Activated B cell treated with CpG ODN at 0.5 μM for 24 hours (primary cell): ENCODE measurements at regions of chr10 and their contacts with region 1.

Region 1: DNA sequence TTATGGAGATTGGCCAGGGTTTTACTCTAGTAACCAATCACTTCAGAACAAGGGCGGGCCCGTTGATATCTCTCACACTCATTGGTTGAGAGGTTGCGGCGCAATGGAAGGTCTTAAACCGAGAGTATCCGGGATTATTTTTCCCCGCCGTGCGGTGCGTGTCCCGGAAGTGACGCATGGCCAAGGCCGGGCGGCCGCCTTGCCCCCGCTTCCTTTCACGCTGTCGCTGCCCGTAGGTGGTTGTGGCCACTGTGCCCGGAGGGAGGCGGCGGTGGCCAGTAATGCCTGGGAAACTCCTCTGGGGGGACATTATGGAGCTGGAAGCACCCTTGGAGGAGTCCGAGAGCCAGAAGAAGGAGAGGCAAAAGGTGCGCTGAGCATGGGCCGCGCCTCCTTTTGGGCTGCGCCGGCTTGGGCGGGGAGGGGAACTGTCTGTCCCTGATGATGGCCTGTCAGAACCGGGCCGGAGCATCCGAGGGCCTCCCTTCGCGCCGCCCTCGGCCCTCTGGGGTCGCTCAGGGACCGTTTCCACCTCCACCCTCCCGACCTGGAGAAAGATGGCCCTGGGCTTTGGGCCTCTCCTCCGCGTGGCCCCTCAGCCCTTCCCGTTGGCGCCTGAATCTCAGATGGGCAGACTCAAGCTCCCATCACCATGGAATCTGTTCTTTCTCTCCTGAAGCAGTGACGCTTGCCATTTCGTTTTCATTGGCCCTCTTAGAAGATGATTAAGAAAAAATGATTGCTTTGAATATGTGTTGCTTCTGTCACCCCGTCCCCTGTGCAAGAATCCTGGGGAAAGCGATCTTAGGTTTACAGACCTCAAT is at the start of gene DDX50:
- DNase-seq: peak; percentile 92
- ATAC-seq: peak; percentile 96
- H3K4me3 Mint-ChIP-seq: peak within 1 kb of the TSS; percentile 98
- H3K27ac Mint-ChIP-seq: peak within 1 kb of the TSS; percentile 98
- H3K4me1 Mint-ChIP-seq: peaks cover 40% of the 10 kb centered on the region
- H3K27me3 Mint-ChIP-seq: no peaks in the 10 kb centered on the region
- CTCF ChIP-seq: no peak
- total RNA-seq, gene DDX50: 36.3 and 41.7 TPM in 2 replicates

Region 2: DNA sequence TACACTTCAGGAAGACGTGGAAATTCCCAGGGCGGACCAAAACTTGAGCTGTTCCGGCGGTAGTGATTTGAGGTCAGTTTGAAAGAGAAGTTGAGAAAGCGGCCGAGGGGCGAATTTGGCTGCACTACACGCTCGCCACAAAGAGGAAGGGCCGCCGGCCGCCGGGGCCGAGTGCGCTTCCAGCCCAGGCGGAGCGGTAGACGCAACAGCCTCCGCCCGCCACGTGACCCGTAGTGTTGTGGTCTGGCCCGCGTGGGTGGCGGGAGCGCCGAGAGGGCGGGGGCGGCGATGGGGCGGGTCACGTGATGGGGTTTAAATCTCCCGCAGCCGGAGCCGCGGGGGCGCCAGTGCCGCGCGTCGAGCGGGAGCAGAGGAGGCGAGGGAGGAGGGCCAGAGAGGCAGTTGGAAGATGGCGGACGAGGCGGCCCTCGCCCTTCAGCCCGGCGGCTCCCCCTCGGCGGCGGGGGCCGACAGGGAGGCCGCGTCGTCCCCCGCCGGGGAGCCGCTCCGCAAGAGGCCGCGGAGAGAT is 1016.9 kb before region 1 on chr10 and contains the start of gene SIRT1:
- CTCF ChIA-PET with region 1: no interaction called
- POLR2A ChIA-PET with region 1: no interaction called
- intact Hi-C with region 1: loop called (anchors 10 kb)
- DNase-seq: peak; percentile 97
- ATAC-seq: peak; percentile 81
- H3K4me3 Mint-ChIP-seq: peak within 1 kb of the TSS; percentile 92
- H3K27ac Mint-ChIP-seq: peak within 1 kb of the TSS; percentile 96
- H3K4me1 Mint-ChIP-seq: peaks cover 31% of the 10 kb centered on the region
- H3K27me3 Mint-ChIP-seq: no peaks in the 10 kb centered on the region
- CTCF ChIP-seq: no peak
- total RNA-seq, gene SIRT1: 30.1 and 31.6 TPM in 2 replicates

Region 3: GRCh38 chr10:68526626-68527307 is 374.5 kb before region 1 on chr10:
- CTCF ChIA-PET with region 1: no interaction called
- POLR2A ChIA-PET with region 1: no interaction called
- intact Hi-C with region 1: loop called (anchors 1 kb)
- DNase-seq: no peak
- ATAC-seq: no peak
- H3K4me3 Mint-ChIP-seq: peak overlapping the region; percentile 86
- H3K27ac Mint-ChIP-seq: peak overlapping the region; percentile 73
- H3K4me1 Mint-ChIP-seq: peaks cover 14% of the 10 kb centered on the region
- H3K27me3 Mint-ChIP-seq: no peaks in the 10 kb centered on the region
- CTCF ChIP-seq: no peak

Region 4: GRCh38 chr10:68826764-68827591 is 74.3 kb before region 1 on chr10 and contains the start of gene STOX1:
- CTCF ChIA-PET with region 1: no interaction called
- POLR2A ChIA-PET with region 1: interaction called, 12 read pairs
- intact Hi-C with region 1: loop called (anchors 1 kb)
- DNase-seq: peak; percentile 52
- ATAC-seq: peak; percentile 68
- H3K4me3 Mint-ChIP-seq: peak within 1 kb of the TSS; percentile 75
- H3K27ac Mint-ChIP-seq: no peak within 1 kb of the TSS
- H3K4me1 Mint-ChIP-seq: peaks cover 7% of the 10 kb centered on the region
- H3K27me3 Mint-ChIP-seq: peaks cover 3% of the 10 kb centered on the region
- CTCF ChIP-seq: no peak
- total RNA-seq, gene STOX1: 0.10 and 0.16 TPM in 2 replicates

Region 5: GRCh38 chr10:69087590-69088470 is 186.5 kb after region 1 on chr10 and contains the start of gene SRGN:
- CTCF ChIA-PET with region 1: no interaction called
- POLR2A ChIA-PET with region 1: interaction called, 6 read pairs
- intact Hi-C with region 1: loop called (anchors 1 kb)
- DNase-seq: peak; percentile 26
- ATAC-seq: peak; percentile 71
- H3K4me3 Mint-ChIP-seq: peak within 1 kb of the TSS; percentile 84
- H3K27ac Mint-ChIP-seq: peak within 1 kb of the TSS; percentile 95
- H3K4me1 Mint-ChIP-seq: peaks cover 56% of the 10 kb centered on the region
- H3K27me3 Mint-ChIP-seq: no peaks in the 10 kb centered on the region
- CTCF ChIP-seq: no peak
- total RNA-seq, gene SRGN: 91.4 and 95.5 TPM in 2 replicates